Endothelial cell of umbilical vein (primary cell): ENCODE measurements at regions of chr13 and their contacts with region 1.

Region 1: DNA sequence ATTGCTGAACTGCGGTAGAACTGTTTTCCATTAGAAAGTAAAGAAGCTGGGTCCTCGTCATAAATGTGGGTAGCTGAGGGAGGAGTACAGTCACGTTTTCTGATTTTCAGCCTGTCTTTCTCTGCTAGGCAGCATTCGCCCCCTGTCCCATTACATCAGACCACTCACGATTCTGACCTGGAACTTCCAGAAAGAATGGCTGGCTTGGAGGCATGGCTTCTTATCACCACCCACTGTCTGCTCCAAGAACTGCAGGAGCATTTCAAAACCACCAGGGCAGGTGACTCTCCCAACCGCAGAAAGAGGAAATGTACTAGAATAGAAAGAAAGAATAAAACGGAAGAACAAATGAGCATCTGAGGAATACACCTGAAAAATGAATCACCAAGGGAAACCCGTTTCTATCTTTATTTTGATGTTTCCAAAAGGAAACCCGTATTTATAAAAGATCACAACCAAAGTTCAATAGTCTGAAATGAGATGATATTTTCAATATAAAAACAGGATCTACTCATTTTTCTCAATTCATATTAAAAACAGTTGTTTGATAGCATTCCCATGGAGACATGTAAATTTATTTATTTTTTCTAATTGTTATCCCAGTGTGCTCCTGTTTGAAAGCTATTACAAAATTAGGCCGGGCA is 22.1 kb upstream of the POMP start:
- DNase-seq: peak; percentile 85
- H3K4me3 ChIP-seq: no peak overlapping the region
- H3K27ac ChIP-seq: no peak overlapping the region
- H3K4me1 ChIP-seq: peaks cover 18% of the 10 kb centered on the region
- H3K27me3 ChIP-seq: no peaks in the 10 kb centered on the region
- CTCF ChIP-seq: peak; percentile 81 to 92
- POLR2A ChIP-seq: no peak

Region 2: GRCh38 chr13:28138012-28138755 is 498.6 kb before region 1 on chr13 and contains the start of gene PAN3:
- CTCF ChIA-PET with region 1: no interaction called
- POLR2A ChIA-PET with region 1: no interaction called
- dilution Hi-C with region 1: no loop called
- intact Hi-C with region 1: loop called (anchors 5 kb)
- DNase-seq: peak; percentile 92
- H3K4me3 ChIP-seq: peak within 1 kb of the TSS; percentile 78 to 100 (median 99)
- H3K27ac ChIP-seq: peak within 1 kb of the TSS; percentile 93
- H3K4me1 ChIP-seq: peaks cover 20% of the 10 kb centered on the region
- H3K27me3 ChIP-seq: no peaks in the 10 kb centered on the region
- CTCF ChIP-seq: no peak
- POLR2A ChIP-seq: peak; percentile 91
- total RNA-seq, gene PAN3: 31.6 and 31.9 TPM in 2 replicates

Region 3: GRCh38 chr13:28408235-28408848 is 228.5 kb before region 1 on chr13:
- CTCF ChIA-PET with region 1: interaction called, 5 read pairs
- POLR2A ChIA-PET with region 1: no interaction called
- dilution Hi-C with region 1: no loop called
- intact Hi-C with region 1: loop called (anchors 2 kb)
- DNase-seq: peak; percentile 100
- H3K4me3 ChIP-seq: peak overlapping the region in 1 of 3 experiments; percentile 10
- H3K27ac ChIP-seq: peak overlapping the region; percentile 97
- H3K4me1 ChIP-seq: peaks cover 53% of the 10 kb centered on the region
- H3K27me3 ChIP-seq: no peaks in the 10 kb centered on the region
- CTCF ChIP-seq: no peak
- POLR2A ChIP-seq: peak; percentile 86

Region 4: DNA sequence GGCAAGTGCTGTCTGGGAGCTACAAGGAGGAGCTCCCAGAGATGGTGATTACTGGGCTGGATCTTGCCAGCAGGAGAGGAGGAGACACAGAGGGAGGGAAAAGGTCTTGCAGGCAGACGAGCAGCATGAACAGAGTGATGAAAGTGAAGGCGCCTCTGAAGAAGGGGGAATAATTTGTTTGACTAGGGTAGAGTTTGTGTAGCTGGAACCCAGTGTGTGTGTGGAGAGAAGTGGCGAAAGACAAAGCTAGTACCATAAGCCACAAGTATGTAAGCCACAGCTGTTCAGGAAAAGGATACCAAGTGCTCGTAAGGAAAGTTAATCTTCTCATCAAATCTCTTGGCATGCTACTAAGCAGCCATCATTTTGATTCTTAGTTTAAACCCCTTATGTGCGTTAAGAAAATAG is 147.3 kb before region 1 on chr13:
- CTCF ChIA-PET with region 1: interaction called, 6 read pairs
- POLR2A ChIA-PET with region 1: no interaction called
- dilution Hi-C with region 1: no loop called
- intact Hi-C with region 1: loop called (anchors 1 kb)
- DNase-seq: peak; percentile 55
- H3K4me3 ChIP-seq: no peak overlapping the region
- H3K27ac ChIP-seq: peak overlapping the region; percentile 76
- H3K4me1 ChIP-seq: peaks cover 46% of the 10 kb centered on the region
- H3K27me3 ChIP-seq: no peaks in the 10 kb centered on the region
- CTCF ChIP-seq: no peak
- POLR2A ChIP-seq: no peak

Region 5: GRCh38 chr13:28574617-28575142 is 62.1 kb before region 1 on chr13:
- CTCF ChIA-PET with region 1: interaction called, 5 read pairs
- POLR2A ChIA-PET with region 1: no interaction called
- dilution Hi-C with region 1: no loop called
- intact Hi-C with region 1: loop called (anchors 2 kb)
- DNase-seq: peak; percentile 98
- H3K4me3 ChIP-seq: no peak overlapping the region
- H3K27ac ChIP-seq: peak overlapping the region; percentile 99
- H3K4me1 ChIP-seq: peaks cover 10% of the 10 kb centered on the region
- H3K27me3 ChIP-seq: no peaks in the 10 kb centered on the region
- CTCF ChIP-seq: no peak
- POLR2A ChIP-seq: no peak

Region 6: GRCh38 chr13:28671126-28671792 is 34.5 kb after region 1 on chr13:
- CTCF ChIA-PET with region 1: no interaction called
- POLR2A ChIA-PET with region 1: no interaction called
- dilution Hi-C with region 1: no loop called
- intact Hi-C with region 1: no loop called
- DNase-seq: no peak
- H3K4me3 ChIP-seq: no peak overlapping the region
- H3K27ac ChIP-seq: no peak overlapping the region
- H3K4me1 ChIP-seq: no peaks in the 10 kb centered on the region
- H3K27me3 ChIP-seq: no peaks in the 10 kb centered on the region
- CTCF ChIP-seq: no peak
- POLR2A ChIP-seq: no peak

Region 7: GRCh38 chr13:28684257-28684656 is 47.5 kb after region 1 on chr13:
- CTCF ChIA-PET with region 1: no interaction called
- POLR2A ChIA-PET with region 1: no interaction called
- dilution Hi-C with region 1: no loop called
- intact Hi-C with region 1: no loop called
- DNase-seq: no peak
- H3K4me3 ChIP-seq: no peak overlapping the region
- H3K27ac ChIP-seq: no peak overlapping the region
- H3K4me1 ChIP-seq: no peaks in the 10 kb centered on the region
- H3K27me3 ChIP-seq: peaks cover 2% of the 10 kb centered on the region in 2 experiments
- CTCF ChIP-seq: no peak
- POLR2A ChIP-seq: no peak

Region 8: DNA sequence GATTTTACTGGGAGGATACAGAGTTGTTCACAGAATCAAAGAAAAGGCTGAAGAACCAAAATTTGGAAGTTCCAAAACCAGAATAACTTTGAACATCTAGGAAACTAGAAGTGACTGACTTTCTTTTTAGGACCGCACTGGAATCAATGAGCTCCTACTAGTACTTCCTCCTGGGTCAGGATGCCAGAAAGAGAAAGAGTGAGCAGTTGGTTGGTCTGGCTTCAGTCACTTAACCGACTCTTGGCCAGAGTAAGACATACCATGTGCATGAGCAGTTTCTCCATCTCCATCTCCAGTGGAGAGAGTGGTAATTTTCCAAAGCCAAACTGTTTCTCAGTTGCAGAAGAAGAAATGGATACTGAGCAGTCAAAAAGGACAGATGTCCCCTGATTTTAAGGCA is 156.2 kb after region 1 on chr13:
- CTCF ChIA-PET with region 1: interaction called, 12 read pairs
- POLR2A ChIA-PET with region 1: no interaction called
- dilution Hi-C with region 1: no loop called
- intact Hi-C with region 1: no loop called
- DNase-seq: no peak
- H3K4me3 ChIP-seq: no peak overlapping the region
- H3K27ac ChIP-seq: no peak overlapping the region
- H3K4me1 ChIP-seq: peaks cover 4% of the 10 kb centered on the region
- H3K27me3 ChIP-seq: peaks cover 28 to 31% of the 10 kb centered on the region in 2 experiments
- CTCF ChIP-seq: no peak
- POLR2A ChIP-seq: no peak

Region 9: DNA sequence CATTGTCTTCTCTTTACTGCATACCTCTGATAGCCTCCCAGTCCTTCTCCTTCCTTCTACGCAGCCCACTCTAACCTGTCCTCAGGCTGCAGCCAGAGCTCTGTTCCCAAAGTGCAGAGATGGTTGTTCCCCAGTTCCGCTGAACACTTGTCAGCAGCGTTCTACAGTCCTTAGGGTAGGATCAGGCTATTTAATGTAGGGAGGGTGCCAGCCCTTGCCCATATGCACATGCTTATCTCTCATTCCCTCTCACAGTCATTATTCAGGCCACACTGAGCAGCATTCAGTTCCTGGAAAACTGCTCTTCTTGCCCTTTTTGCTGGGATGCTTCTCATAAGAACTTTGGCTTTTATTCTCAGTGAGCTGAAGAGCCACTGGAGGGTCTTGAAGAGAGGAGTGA is 364.0 kb after region 1 on chr13:
- CTCF ChIA-PET with region 1: no interaction called
- POLR2A ChIA-PET with region 1: no interaction called
- dilution Hi-C with region 1: no loop called
- intact Hi-C with region 1: no loop called
- DNase-seq: no peak
- H3K4me3 ChIP-seq: no peak overlapping the region
- H3K27ac ChIP-seq: no peak overlapping the region
- H3K4me1 ChIP-seq: no peaks in the 10 kb centered on the region
- H3K27me3 ChIP-seq: no peaks in the 10 kb centered on the region
- CTCF ChIP-seq: no peak
- POLR2A ChIP-seq: no peak